ENCODE measurements at regions of chrX and their contacts with region 1.

Region 1: DNA sequence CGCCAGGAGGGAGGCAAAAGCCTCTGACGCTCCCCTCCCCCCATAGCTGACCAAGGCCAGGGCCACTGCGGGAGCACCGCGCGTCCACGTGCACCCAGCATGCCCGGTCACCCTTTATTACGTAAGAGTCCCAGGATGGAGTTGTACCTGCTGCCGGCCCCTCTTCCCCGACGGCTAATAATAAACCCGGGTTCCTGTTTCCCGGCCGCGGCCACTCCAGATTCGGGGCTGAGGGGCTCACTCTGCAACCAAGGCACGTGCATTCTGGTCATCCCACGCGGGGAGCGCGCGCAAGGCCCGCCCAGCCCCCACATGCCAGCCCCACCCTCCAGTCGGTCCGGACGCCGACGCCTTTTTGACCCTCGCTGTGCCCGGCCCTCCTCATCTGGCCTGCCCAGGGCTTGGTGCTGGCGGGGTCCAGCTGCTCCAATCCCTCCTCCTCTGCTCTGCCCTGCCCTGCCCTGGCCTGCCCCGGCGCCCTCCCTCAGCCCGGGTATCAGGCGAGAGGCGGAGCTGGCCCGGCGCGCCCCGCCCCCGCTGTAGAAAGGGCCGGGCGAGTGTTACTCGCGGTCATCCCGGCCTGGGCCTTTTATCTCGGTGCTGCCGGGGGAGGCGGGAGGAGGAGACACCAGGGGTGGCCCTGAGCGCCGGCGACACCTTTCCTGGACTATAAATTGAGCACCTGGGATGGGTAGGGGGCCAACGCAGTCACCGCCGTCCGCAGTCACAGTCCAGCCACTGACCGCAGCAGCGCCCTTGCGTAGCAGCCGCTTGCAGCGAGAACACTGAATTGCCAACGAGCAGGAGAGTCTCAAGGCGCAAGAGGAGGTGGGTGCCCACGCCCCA is 2.5 kb downstream of the MID1IP1 start:
- DNase-seq: peak; percentile 87
- ATAC-seq: peak; percentile 68
- H3K4me3 Mint-ChIP-seq: peak overlapping the region; percentile 95
- H3K27ac Mint-ChIP-seq: peak overlapping the region; percentile 96
- H3K4me1 Mint-ChIP-seq: peaks cover 15% of the 10 kb centered on the region
- H3K27me3 Mint-ChIP-seq: no peaks in the 10 kb centered on the region

Region 2: DNA sequence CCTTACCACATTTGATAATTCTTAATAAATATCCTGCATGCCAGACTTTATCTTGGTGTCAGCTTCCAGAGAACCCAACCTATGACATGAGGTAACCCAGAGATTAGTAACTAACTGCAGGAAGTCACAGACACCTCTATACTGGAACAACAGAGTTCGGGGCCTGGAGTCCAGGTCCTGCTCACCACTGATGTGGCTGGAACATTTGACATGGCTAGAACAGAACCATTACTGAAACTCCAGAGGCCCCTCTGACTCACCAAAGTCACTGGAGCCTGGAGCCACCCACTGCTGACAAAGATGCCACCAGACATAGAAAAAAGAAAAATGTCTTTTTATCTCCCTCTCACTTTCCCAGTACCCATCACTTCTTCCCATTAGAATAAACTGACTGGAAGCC is 401.1 kb after region 1 on chrX:
- CTCF ChIA-PET with region 1: no interaction called
- POLR2A ChIA-PET with region 1: no interaction called
- intact Hi-C with region 1: loop called in 1 of 2 experiments (anchors 2 kb)
- DNase-seq: peak; percentile 75
- ATAC-seq: peak; percentile 90
- H3K4me3 Mint-ChIP-seq: peak overlapping the region; percentile 21
- H3K27ac Mint-ChIP-seq: peak overlapping the region; percentile 83
- H3K4me1 Mint-ChIP-seq: peaks cover 55% of the 10 kb centered on the region
- H3K27me3 Mint-ChIP-seq: no peaks in the 10 kb centered on the region

Region 3: GRCh38 chrX:39613482-39613921 is 809.7 kb after region 1 on chrX:
- CTCF ChIA-PET with region 1: no interaction called
- POLR2A ChIA-PET with region 1: no interaction called
- intact Hi-C with region 1: loop called in 1 of 2 experiments (anchors 2 kb)
- DNase-seq: peak; percentile 47
- ATAC-seq: peak; percentile 30
- H3K4me3 Mint-ChIP-seq: peak overlapping the region; percentile 77
- H3K27ac Mint-ChIP-seq: peak overlapping the region; percentile 89
- H3K4me1 Mint-ChIP-seq: peaks cover 33% of the 10 kb centered on the region
- H3K27me3 Mint-ChIP-seq: no peaks in the 10 kb centered on the region

Region 4: GRCh38 chrX:40108959-40109287 is 1305.1 kb after region 1 on chrX:
- CTCF ChIA-PET with region 1: no interaction called
- POLR2A ChIA-PET with region 1: no interaction called
- intact Hi-C with region 1: loop called in 1 of 2 experiments (anchors 5 kb)
- DNase-seq: peak; percentile 83
- ATAC-seq: peak; percentile 60
- H3K4me3 Mint-ChIP-seq: peak overlapping the region; percentile 46
- H3K27ac Mint-ChIP-seq: no peak overlapping the region
- H3K4me1 Mint-ChIP-seq: peaks cover 9% of the 10 kb centered on the region
- H3K27me3 Mint-ChIP-seq: peaks cover 4% of the 10 kb centered on the region

Region 5: GRCh38 chrX:40580537-40581335 is 1776.9 kb after region 1 on chrX and contains the start of gene ATP6AP2:
- CTCF ChIA-PET with region 1: no interaction called
- POLR2A ChIA-PET with region 1: no interaction called
- intact Hi-C with region 1: loop called in 1 of 2 experiments (anchors 10 kb)
- DNase-seq: peak; percentile 94
- ATAC-seq: peak; percentile 98
- H3K4me3 Mint-ChIP-seq: peak within 1 kb of the TSS; percentile 77
- H3K27ac Mint-ChIP-seq: peak within 1 kb of the TSS; percentile 86
- H3K4me1 Mint-ChIP-seq: peaks cover 29% of the 10 kb centered on the region
- H3K27me3 Mint-ChIP-seq: no peaks in the 10 kb centered on the region
- total RNA-seq, gene ATP6AP2: 39.9 to 52.2 TPM

Measured in activated CD4-positive, alpha-beta T cell treated with anti-CD3 and anti-CD28 coated beads for 36 hours (primary cell).